Activated B cell treated with CpG ODN at 0.5 μM for 24 hours (primary cell): ENCODE measurements at regions of chr11 and their contacts with region 1.

Region 1: GRCh38 chr11:10770626-10771254 is 19.7 kb downstream of the CTR9 start:
- DNase-seq: no peak
- ATAC-seq: peak; percentile 28
- H3K4me3 Mint-ChIP-seq: no peak overlapping the region
- H3K27ac Mint-ChIP-seq: no peak overlapping the region
- H3K4me1 Mint-ChIP-seq: peaks cover 3% of the 10 kb centered on the region
- H3K27me3 Mint-ChIP-seq: no peaks in the 10 kb centered on the region
- CTCF ChIP-seq: no peak

Region 2: GRCh38 chr11:10750838-10751580 is 19.7 kb before region 1 on chr11 and contains the start of gene CTR9:
- CTCF ChIA-PET with region 1: interaction called, 10 read pairs
- POLR2A ChIA-PET with region 1: no interaction called
- intact Hi-C with region 1: no loop called
- DNase-seq: peak; percentile 90
- ATAC-seq: peak; percentile 90
- H3K4me3 Mint-ChIP-seq: peak within 1 kb of the TSS; percentile 95
- H3K27ac Mint-ChIP-seq: peak within 1 kb of the TSS; percentile 89
- H3K4me1 Mint-ChIP-seq: peaks cover 23% of the 10 kb centered on the region
- H3K27me3 Mint-ChIP-seq: no peaks in the 10 kb centered on the region
- CTCF ChIP-seq: no peak
- total RNA-seq, gene CTR9: 50.6 and 52.8 TPM in 2 replicates

Region 3: GRCh38 chr11:11787305-11788062 is 1016.7 kb after region 1 on chr11:
- CTCF ChIA-PET with region 1: interaction called, 18 read pairs
- POLR2A ChIA-PET with region 1: no interaction called
- intact Hi-C with region 1: loop called (anchors 1 kb)
- DNase-seq: peak; percentile 33
- ATAC-seq: peak; percentile 85
- H3K4me3 Mint-ChIP-seq: no peak overlapping the region
- H3K27ac Mint-ChIP-seq: no peak overlapping the region
- H3K4me1 Mint-ChIP-seq: no peaks in the 10 kb centered on the region
- H3K27me3 Mint-ChIP-seq: peaks cover 9% of the 10 kb centered on the region
- CTCF ChIP-seq: peak; percentile 81